Natural killer cell (primary cell): ENCODE measurements at regions of chr19 and their contacts with region 1.

Region 1: GRCh38 chr19:39765091-39766076 is 13.3 kb upstream of the LEUTX start:
- DNase-seq: peak in 1 of 2 donors; percentile 74
- ATAC-seq: no peak
- H3K4me3 ChIP-seq: no peak overlapping the region
- H3K4me3 Mint-ChIP-seq: no peak overlapping the region
- H3K27ac ChIP-seq: no peak overlapping the region
- H3K27ac Mint-ChIP-seq: no peak overlapping the region
- H3K4me1 ChIP-seq: no peaks in the 10 kb centered on the region
- H3K4me1 Mint-ChIP-seq: peaks cover 0 to 5% of the 10 kb centered on the region in 2 donors
- H3K27me3 ChIP-seq: no peaks in the 10 kb centered on the region
- H3K27me3 Mint-ChIP-seq: peaks cover 8 to 11% of the 10 kb centered on the region in 2 donors
- CTCF ChIP-seq: peak; percentile 74

Region 2: GRCh38 chr19:39554701-39555311 is 210.6 kb before region 1 on chr19:
- intact Hi-C with region 1: loop called (anchors 5 kb)
- DNase-seq: no peak
- ATAC-seq: no peak
- H3K4me3 ChIP-seq: no peak overlapping the region
- H3K4me3 Mint-ChIP-seq: no peak overlapping the region
- H3K27ac ChIP-seq: no peak overlapping the region
- H3K27ac Mint-ChIP-seq: no peak overlapping the region
- H3K4me1 ChIP-seq: peaks cover 21% of the 10 kb centered on the region
- H3K4me1 Mint-ChIP-seq: peaks cover 13 to 14% of the 10 kb centered on the region in 2 donors
- H3K27me3 ChIP-seq: no peaks in the 10 kb centered on the region
- H3K27me3 Mint-ChIP-seq: no peaks in the 10 kb centered on the region
- CTCF ChIP-seq: no peak